Panc1 (cell line): ENCODE measurements at regions of chr7 and their contacts with region 1.

Region 1: DNA sequence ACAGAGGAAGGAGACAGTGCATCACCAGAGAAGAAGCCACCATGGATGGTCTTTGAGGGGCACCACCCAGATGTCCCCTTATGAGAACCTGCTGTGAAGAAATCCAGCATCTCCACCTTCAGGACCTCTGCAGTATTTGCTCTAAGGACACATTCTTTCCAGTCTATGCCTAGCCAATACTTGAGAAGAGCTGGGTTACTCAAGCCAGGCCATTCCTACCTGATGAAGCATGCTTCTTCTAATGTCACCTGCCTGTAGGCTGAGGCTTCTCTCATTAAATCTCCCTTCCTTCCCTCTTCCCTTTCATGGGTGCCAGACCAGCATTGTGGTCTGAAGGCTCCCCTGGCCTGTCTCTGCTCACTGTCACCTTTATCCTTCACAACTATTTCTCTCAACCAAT is 654.5 kb upstream of the AUTS2 start:
- DNase-seq: no peak
- ATAC-seq: no peak
- H3K4me3 ChIP-seq: no peak overlapping the region
- H3K27ac ChIP-seq: no peak overlapping the region
- H3K4me1 ChIP-seq: no peaks in the 10 kb centered on the region
- H3K27me3 ChIP-seq: no peaks in the 10 kb centered on the region
- CTCF ChIP-seq: no peak

Region 2: DNA sequence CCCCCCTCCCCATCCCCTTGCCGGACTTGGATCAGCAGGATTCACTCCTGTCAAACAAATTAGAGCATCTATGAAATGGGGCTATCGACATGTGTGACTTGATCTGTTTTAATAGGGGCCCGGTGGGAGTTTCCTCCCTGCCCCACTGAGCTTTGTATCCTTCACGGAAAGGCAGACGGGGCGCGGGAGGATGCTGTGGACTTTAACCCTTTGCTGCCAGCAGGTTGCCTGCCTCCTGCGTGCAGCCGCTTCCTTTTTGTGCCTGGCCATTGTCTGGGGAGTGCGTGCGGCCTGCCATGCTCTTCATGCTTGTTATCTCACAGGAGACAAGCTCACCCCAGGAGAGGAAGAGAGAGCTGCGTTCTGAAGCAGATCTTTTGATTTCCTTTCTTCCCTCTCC is 1675.3 kb after region 1 on chr7:
- CTCF ChIA-PET with region 1: no interaction called
- POLR2A ChIA-PET with region 1: interaction called, 13 read pairs
- in situ Hi-C with region 1: no loop called
- intact Hi-C with region 1: no loop called
- DNase-seq: no peak
- ATAC-seq: no peak
- H3K4me3 ChIP-seq: no peak overlapping the region
- H3K27ac ChIP-seq: no peak overlapping the region
- H3K4me1 ChIP-seq: no peaks in the 10 kb centered on the region
- H3K27me3 ChIP-seq: no peaks in the 10 kb centered on the region
- CTCF ChIP-seq: no peak